AG04450 (cell line): ENCODE measurements at regions of chr12 and their contacts with region 1.

Region 1: DNA sequence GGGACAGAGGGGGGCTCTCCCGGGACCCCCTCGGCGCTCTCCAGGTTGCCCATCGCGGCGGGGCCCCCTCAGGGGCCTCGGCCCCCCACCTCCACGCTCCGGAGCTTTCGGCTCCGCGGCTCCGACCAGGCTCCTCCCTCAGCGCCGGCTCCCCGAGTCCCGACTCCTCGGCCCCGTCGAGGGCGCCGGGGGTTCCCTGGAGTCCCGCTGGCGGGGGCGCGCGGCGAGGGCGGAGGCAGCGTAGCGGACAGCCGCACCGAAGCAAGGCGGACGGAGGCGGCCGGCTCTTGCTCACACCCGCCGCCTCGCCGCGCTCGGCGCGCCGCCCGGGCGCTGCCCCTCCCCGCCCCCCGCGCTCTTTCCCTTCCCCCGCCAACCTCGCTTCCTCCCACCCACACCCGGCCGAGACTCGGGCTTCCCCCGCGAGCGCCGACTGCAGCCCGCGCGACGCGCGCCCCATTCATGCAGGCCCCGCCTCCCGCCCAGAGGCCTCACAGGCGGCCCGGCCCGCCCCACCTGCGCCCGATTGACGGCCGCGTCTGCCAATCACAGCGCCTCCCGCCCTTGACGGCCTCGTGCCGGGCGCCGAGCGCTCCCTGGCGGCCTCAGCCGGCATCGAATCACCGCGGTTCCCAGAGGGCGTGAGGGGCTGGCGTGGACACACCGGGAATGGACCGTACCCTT is at the start of gene FMNL3:
- DNase-seq: peak; percentile 87
- H3K4me3 ChIP-seq: peak within 1 kb of the TSS; percentile 87
- H3K27ac ChIP-seq: peak within 1 kb of the TSS; percentile 80
- H3K27me3 ChIP-seq: peaks cover 4% of the 10 kb centered on the region
- CTCF ChIP-seq: peak; percentile 89
- polyA plus RNA-seq, gene FMNL3: 15.8 and 16.1 TPM in 2 replicates

Region 2: GRCh38 chr12:49609746-49610089 is 97.6 kb before region 1 on chr12:
- CTCF ChIA-PET with region 1: no interaction called
- POLR2A ChIA-PET with region 1: no interaction called
- DNase-seq: no peak
- H3K4me3 ChIP-seq: no peak overlapping the region
- H3K27ac ChIP-seq: no peak overlapping the region
- H3K27me3 ChIP-seq: no peaks in the 10 kb centered on the region
- CTCF ChIP-seq: no peak

Region 3: GRCh38 chr12:49636979-49637755 is 70.1 kb before region 1 on chr12:
- CTCF ChIA-PET with region 1: interaction called, 64 read pairs
- POLR2A ChIA-PET with region 1: interaction called, 3 read pairs
- DNase-seq: peak; percentile 39
- H3K4me3 ChIP-seq: no peak overlapping the region
- H3K27ac ChIP-seq: peak overlapping the region; percentile 47
- H3K27me3 ChIP-seq: no peaks in the 10 kb centered on the region
- CTCF ChIP-seq: peak; percentile 86

Region 4: GRCh38 chr12:49644620-49644994 is 62.7 kb before region 1 on chr12:
- CTCF ChIA-PET with region 1: interaction called, 76 read pairs
- POLR2A ChIA-PET with region 1: interaction called, 4 read pairs
- DNase-seq: peak; percentile 54
- H3K4me3 ChIP-seq: no peak overlapping the region
- H3K27ac ChIP-seq: no peak overlapping the region
- H3K27me3 ChIP-seq: no peaks in the 10 kb centered on the region
- CTCF ChIP-seq: peak; percentile 99

Region 5: GRCh38 chr12:49662998-49663843 is 44.0 kb before region 1 on chr12:
- CTCF ChIA-PET with region 1: interaction called, 10 read pairs
- POLR2A ChIA-PET with region 1: interaction called, 4 read pairs
- DNase-seq: peak; percentile 46
- H3K4me3 ChIP-seq: no peak overlapping the region
- H3K27ac ChIP-seq: peak overlapping the region; percentile 89
- H3K27me3 ChIP-seq: no peaks in the 10 kb centered on the region
- CTCF ChIP-seq: no peak

Region 6: DNA sequence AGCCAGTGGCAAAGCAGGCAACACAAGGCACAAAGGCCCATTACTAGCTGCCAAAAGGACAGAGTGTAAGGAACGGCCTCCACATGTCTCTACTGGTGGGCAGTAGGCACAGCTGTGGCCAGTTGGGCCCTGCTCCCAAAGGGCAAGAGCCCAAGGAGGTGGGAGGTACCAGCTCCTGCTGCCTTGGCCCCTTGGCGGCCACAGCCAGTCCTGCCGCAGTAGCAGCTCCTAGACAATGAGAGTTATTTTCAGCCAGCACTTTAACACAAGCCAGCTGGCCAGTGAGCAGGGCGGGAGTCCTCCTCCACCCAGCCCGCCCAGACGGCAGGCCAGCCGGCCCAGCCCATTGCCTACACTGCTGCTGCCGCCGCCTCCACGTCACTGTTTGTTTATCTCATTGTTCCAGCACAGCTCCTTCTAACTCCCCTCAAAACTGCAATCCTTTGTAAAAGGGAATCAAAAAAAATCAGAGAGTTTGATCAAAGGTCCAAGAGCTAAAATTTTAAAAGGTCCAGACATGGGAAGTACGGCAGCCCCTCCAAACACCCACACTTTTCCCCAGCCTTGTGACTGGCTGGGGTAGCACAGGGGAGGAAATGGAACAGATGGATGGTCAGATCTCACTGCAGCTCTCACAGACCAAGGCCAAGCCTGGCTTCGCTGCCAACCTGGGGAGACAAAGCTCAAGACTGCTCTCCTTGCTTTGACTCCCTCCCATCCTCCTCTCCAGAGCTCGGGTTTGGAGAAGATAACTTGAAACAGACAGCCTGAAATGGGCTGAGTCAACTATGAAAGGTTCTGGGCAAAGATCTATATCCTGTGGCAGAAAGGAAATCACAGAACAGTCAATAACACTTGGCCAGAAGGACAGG is 33.6 kb before region 1 on chr12:
- CTCF ChIA-PET with region 1: interaction called, 10 read pairs
- POLR2A ChIA-PET with region 1: interaction called, 22 read pairs
- DNase-seq: peak; percentile 88
- H3K4me3 ChIP-seq: peak overlapping the region; percentile 34
- H3K27ac ChIP-seq: peak overlapping the region; percentile 99
- H3K27me3 ChIP-seq: no peaks in the 10 kb centered on the region
- CTCF ChIP-seq: peak; percentile 46

Region 7: DNA sequence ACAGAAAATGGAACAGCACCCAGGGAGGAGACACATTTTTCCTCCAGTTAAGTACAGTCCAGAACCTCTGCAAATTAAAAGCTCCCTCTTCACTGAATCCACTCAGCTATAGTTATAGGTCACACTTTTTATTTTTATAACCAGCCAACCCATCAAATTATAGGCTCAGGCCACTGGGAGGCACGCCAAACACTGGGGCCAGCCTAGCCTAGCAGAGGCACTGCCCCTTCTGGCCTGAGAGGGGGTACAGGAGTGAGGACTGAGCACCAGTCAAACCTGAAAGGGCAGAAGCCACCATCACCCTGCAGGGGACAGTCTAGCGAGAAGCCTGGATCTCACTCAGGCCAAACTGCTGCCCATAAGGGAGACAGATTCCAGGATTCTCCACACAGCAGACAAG is 19.3 kb before region 1 on chr12:
- CTCF ChIA-PET with region 1: no interaction called
- POLR2A ChIA-PET with region 1: no interaction called
- DNase-seq: no peak
- H3K4me3 ChIP-seq: no peak overlapping the region
- H3K27ac ChIP-seq: no peak overlapping the region
- H3K27me3 ChIP-seq: no peaks in the 10 kb centered on the region
- CTCF ChIP-seq: no peak

Region 8: DNA sequence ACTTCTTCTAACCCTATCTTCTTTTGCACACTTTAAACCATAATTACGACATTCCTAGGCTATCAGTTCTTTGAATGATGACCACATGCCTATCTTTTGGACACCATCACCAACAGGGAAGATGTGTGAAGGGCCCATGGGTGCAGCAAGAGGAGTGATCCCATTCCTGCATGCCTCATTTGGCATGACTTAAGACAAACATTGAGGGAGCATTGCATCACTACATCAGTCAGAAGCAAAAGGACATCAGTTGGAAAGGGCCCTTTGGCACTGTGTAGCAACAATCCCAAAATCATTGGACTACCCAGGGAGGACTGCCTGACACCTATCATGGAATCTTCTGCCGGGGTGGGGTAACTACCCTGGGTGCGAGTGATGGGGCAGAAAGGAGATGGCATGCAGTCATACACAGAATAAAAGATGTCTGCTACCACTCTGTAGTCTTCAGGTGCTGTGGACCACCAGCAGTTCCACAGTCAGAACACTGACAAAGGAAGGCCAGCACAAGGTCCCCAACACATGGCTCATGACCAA is 23.4 kb after region 1 on chr12:
- CTCF ChIA-PET with region 1: no interaction called
- POLR2A ChIA-PET with region 1: no interaction called
- DNase-seq: no peak
- H3K4me3 ChIP-seq: no peak overlapping the region
- H3K27ac ChIP-seq: no peak overlapping the region
- H3K27me3 ChIP-seq: peaks cover 17% of the 10 kb centered on the region
- CTCF ChIP-seq: no peak

Region 9: DNA sequence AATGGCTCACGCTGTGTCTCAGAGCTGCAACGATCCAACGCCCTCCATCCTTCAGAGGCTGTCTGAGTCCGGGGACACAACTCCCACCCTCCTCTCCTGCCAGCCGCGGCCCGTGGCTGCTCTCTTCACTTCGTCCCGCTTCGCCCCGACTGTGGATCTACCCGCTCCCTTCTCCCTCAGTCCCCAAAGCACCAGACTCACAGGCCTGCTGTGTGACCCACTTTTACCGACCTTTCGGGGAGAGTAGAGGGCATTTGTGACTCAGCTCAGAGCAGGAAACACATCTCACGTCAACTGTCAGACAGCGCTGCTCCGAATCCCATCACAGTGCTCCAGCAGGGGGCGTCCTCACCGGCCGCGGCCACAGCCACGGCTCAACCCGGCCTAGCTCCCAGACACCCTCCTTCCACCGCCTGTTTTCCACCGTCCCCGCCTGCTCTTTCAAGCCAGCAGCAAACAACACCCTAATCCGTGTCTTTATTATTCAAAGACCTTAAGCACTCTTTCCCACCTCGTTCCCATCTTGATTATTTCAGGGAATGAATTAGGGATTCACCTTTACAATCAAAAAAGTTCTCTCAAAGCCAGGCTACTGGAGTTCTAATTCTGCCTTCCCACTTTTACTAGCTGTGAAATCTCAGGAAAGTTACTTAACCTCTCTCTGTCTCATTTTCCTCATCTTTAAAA is 238.3 kb after region 1 on chr12:
- CTCF ChIA-PET with region 1: no interaction called
- POLR2A ChIA-PET with region 1: no interaction called
- DNase-seq: peak; percentile 21
- H3K4me3 ChIP-seq: peak overlapping the region; percentile 44
- H3K27ac ChIP-seq: no peak overlapping the region
- H3K27me3 ChIP-seq: peaks cover 13% of the 10 kb centered on the region
- CTCF ChIP-seq: peak; percentile 95